H1 (cell line): ENCODE measurements at regions of chr13 and their contacts with region 1.

Region 1: GRCh38 chr13:31424117-31424729 is 224.4 kb downstream of the B3GLCT start:
- DNase-seq: peak; percentile 44 to 75
- H3K4me3 ChIP-seq: no peak overlapping the region
- H3K27ac ChIP-seq: no peak overlapping the region
- H3K4me1 ChIP-seq: peaks cover 0 to 5% (median 0%) of the 10 kb centered on the region in 4 experiments; a peak in 1 of 7 replicates
- H3K27me3 ChIP-seq: no peaks in the 10 kb centered on the region
- CTCF ChIP-seq: peak; percentile 88 to 97 (median 91)
- EP300 ChIP-seq: no peak
- POLR2A ChIP-seq: no peak
- RAD21 ChIP-seq: peak; percentile 93 to 95

Region 2: GRCh38 chr13:31184981-31185685 is 239.1 kb before region 1 on chr13:
- CTCF ChIA-PET with region 1: no interaction called
- POLR2A ChIA-PET with region 1: no interaction called
- DNase-seq: no peak
- H3K4me3 ChIP-seq: no peak overlapping the region
- H3K27ac ChIP-seq: no peak overlapping the region
- H3K4me1 ChIP-seq: no peaks in the 10 kb centered on the region
- H3K27me3 ChIP-seq: no peaks in the 10 kb centered on the region
- CTCF ChIP-seq: no peak
- EP300 ChIP-seq: no peak
- POLR2A ChIP-seq: no peak
- RAD21 ChIP-seq: no peak

Region 3: DNA sequence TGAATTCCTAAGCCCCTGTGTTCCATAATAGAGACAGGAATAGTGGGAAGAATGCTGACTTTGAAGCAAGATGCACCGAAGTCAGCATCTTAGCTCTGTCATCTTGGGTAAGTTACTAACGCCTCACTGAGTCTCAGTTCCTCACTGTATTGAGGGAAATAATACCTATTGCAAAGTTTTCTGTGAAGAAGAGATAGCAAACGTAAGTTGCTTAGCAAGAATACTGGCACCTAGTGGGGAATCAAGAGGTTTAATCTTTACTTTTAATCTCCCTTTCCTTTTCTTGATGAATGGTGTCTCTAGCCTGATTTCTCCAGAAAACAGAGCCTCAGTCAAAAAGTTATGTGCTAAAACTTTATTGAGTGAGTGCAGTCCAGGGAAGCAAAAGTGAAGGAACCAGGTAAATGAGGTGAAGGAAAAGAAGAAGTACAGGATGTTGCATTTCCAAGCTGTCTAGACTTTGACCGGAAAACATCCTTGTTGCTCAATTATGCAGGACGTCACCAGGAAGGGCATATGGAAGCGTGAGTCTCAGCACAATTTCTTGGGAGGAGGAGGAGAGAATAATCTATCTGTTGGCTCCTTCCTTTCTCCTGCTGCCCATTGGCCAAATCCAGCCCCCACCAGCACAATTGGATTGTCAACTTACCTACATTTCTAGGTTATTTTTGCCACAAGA is 14.4 kb before region 1 on chr13:
- CTCF ChIA-PET with region 1: interaction called, 22 read pairs
- POLR2A ChIA-PET with region 1: no interaction called
- DNase-seq: no peak
- H3K4me3 ChIP-seq: no peak overlapping the region
- H3K27ac ChIP-seq: no peak overlapping the region
- H3K4me1 ChIP-seq: no peaks in the 10 kb centered on the region
- H3K27me3 ChIP-seq: no peaks in the 10 kb centered on the region
- CTCF ChIP-seq: peak in 2 of 3 experiments; percentile 16 to 18; a peak in 2 of 4 replicates
- EP300 ChIP-seq: no peak
- POLR2A ChIP-seq: no peak
- RAD21 ChIP-seq: peak; percentile 40 to 45

Region 4: DNA sequence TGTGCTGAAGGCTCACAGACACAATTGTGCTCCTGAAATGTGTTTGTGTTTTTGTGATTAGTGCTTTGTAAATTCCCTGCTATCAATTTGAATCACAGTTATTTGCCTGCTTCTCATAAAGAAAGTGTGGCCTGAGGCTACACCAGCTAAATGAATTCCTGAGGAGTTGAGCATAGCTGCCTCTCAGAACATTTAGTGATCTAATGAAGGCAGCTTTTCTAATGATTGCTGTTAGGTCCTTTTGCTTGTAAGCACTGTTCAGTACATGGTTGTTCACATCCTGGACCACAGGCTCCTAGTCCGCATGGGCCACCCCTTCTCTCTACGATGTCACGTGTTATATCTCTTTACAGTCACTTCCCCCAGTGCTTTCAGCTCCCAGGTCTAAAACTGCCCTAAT is 13.8 kb after region 1 on chr13:
- CTCF ChIA-PET with region 1: interaction called, 11 read pairs
- POLR2A ChIA-PET with region 1: no interaction called
- DNase-seq: no peak
- H3K4me3 ChIP-seq: no peak overlapping the region
- H3K27ac ChIP-seq: no peak overlapping the region
- H3K4me1 ChIP-seq: peaks cover 0 to 2% (median 0%) of the 10 kb centered on the region in 4 experiments; a peak in 2 of 7 replicates
- H3K27me3 ChIP-seq: no peaks in the 10 kb centered on the region
- CTCF ChIP-seq: no peak
- EP300 ChIP-seq: no peak
- POLR2A ChIP-seq: no peak
- RAD21 ChIP-seq: no peak